Cardiac septum (tissue), 1 donor: ENCODE measurements at regions of chr2 and their contacts with region 1.

Region 1: GRCh38 chr2:120566331-120567035 is 169.2 kb upstream of the GLI2 start:
- DNase-seq: peak; percentile 87

Region 2: GRCh38 chr2:120343433-120344105 is 222.9 kb before region 1 on chr2:
- intact Hi-C with region 1: no loop called
- DNase-seq: peak; percentile 93

Region 3: DNA sequence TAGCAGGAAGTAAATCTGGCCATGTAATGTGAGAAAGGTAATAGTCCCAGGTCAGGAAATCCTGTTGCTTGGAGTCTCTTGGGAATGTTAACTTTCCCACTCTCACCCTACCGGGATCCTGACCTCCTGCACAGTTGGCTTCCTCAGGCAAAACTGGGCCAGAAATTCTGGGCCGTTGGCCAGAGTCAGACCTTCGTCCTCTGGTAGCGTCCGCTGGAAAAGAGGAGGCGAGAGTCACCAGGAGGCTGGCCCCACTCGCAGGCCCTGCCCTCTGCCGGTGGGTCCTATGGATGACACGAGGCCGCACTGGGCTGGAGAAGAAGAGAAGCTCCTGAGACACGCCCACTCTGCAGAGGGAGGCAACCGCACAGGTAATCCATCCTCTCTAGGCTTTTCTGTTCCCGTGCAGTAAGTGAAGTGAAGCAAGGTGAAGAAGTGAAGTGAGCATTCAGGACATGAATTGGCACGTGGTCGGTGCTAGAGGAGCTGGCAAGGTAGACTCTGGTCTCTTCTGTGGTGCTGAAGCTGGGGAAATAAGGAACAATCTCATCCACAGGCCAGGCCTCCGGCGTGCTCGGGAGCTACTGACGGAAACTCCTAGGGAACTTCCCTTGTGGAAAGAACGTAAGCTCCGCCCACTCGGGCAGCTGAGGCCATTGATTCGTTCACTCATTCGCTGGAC is 13.5 kb before region 1 on chr2:
- intact Hi-C with region 1: loop called (anchors 2 kb)
- DNase-seq: peak; percentile 94

Region 4: DNA sequence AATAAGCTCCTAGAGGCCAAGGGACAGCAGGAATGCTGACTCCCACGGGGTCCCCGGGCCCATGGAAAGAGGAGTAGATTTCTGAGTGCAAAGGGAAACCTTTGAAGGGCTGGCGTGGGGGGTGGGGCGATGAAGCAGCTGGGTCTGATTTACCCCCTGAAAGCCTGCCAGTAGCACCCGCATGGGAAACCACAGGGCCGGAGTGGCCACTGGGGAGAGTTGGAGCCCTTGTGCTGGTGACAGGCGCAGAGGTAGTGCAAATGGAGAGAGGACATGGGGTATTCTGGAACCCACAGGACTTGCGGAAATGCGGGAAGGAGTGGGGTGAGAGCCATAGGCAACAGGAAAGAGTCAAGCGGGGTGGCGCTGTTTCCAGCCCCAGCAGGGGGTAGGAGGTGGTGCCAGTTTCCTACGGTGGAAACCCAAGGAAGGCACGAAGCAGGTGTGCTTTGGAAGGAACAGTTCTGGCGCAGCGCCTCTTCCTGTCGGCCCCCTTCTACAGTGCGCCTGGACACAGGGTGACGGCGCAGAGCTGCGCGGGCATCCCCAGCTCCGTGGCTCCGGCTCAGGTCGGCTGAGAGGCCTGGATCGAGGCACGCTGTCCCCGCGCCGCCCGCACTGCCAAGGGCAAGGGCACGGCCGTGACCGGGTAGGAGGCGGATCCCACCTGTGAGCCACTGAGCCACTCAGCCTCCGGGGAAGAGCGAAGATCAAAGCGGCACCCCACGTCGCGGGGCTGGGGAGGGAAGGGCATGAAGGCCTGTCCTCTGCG is 20.2 kb after region 1 on chr2:
- intact Hi-C with region 1: no loop called
- DNase-seq: no peak

Region 5: GRCh38 chr2:120675460-120676130 is 109.1 kb after region 1 on chr2:
- intact Hi-C with region 1: loop called (anchors 5 kb)
- DNase-seq: peak; percentile 79